Gastrocnemius medialis (tissue), 4 donors: ENCODE measurements at regions of chr5 and their contacts with region 1.

Region 1: DNA sequence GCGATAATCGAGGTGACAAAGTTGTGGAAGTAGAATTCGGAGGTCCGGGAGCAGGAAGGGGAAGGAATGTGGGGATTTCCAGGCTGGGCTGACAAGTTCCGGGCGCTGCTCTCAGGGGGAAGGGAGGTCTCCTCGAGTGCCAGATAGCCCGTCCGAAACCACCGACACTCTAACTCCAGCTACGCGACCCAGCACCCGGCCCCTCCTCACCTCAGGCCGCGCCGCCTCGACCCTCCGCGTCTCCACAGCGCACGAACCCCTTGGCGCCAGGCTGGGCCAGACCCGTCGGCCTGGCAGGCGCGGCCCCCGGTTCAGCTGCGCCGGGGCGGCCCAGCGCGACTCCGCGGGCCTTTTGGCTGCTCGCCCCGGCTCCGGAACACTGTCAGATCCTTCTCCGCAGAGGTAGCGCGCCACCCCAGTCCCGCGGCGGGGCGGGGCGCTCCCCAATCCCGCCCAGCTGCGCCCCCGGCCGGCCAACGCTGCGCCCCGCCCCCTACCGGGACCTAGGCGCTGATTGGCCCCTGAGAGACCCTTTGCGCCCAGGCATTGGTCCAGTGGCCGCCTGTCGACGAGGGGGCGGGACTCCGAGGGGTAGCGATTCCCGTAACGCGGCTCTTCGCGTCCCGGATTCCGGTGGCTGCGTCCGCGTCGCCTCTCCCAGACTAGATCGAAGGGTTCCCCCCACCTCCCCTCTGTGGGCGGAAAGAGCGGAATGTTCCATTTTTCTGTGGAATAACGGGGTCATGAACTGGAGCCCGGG is at the start of gene IL6ST:
- DNase-seq: peak; percentile 96 to 97
- ATAC-seq: peak; percentile 84 to 87
- H3K4me3 ChIP-seq: peak within 1 kb of the TSS; percentile 82 to 95 (median 84)
- H3K27ac ChIP-seq: peak within 1 kb of the TSS; percentile 95 to 99 (median 98)
- H3K4me1 ChIP-seq: peaks cover 35 to 36% of the 10 kb centered on the region in 2 donors
- H3K27me3 ChIP-seq: no peaks in the 10 kb centered on the region
- CTCF ChIP-seq: peak in 1 of 5 experiments; percentile 17
- POLR2A ChIP-seq: peak; percentile 96 to 98
- total RNA-seq, gene IL6ST: 128 to 228 (median 167) TPM

Region 2: DNA sequence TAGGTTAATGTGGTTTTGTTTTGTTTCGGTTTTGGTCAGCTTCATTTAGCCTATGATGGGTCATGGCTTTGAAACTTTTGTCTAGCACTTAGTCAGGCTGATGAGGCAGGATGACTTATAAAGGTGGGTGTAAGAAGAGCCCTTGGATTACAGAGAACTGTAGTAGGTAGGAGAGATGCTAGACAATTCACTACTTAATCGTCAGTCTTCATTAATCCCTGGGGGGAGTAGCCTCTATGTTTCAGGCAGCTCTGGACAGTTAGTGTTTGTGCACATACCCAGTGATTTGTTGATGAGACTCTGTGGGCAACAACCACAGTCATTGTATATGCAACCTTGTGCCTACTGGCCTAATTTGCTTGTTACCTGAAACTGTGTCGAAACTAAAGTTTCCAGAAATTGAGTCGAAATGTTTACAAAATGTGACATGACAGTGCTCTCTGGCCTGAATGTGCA is 573.7 kb before region 1 on chr5:
- in situ Hi-C with region 1: no loop called
- intact Hi-C with region 1: loop called (anchors 10 kb)
- DNase-seq: no peak
- ATAC-seq: no peak
- H3K4me3 ChIP-seq: no peak overlapping the region
- H3K27ac ChIP-seq: peak overlapping the region; percentile 1 to 53 (median 30)
- H3K4me1 ChIP-seq: peaks cover 33 to 54% of the 10 kb centered on the region in 2 donors
- H3K27me3 ChIP-seq: no peaks in the 10 kb centered on the region
- CTCF ChIP-seq: no peak
- POLR2A ChIP-seq: no peak

Region 3: DNA sequence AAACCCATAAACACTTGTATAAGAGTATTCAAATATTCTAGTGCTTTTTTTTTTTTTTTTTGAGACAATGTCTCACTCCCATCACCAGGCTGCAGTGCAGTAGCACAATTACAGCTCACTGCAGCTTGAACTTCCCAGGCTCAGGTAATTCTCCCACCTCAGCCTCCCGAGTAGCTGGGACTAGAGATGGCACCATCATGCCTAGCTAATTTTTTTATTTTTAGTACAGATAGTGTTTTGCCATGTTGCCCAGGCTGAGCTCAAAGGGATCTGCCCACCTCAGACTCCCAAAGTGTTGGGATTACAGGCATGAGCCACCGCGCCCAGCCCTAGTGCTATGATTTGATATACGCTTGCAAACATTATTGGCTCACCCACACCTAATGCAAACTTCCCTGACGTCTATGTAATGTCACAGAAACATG is 11.8 kb before region 1 on chr5:
- in situ Hi-C with region 1: no loop called
- intact Hi-C with region 1: loop called (anchors 2 kb)
- DNase-seq: no peak
- ATAC-seq: no peak
- H3K4me3 ChIP-seq: no peak overlapping the region
- H3K27ac ChIP-seq: peak overlapping the region; percentile 2 to 52 (median 46)
- H3K4me1 ChIP-seq: peaks cover 37 to 38% of the 10 kb centered on the region in 2 donors
- H3K27me3 ChIP-seq: no peaks in the 10 kb centered on the region
- CTCF ChIP-seq: peak in 1 of 5 experiments; percentile 28
- POLR2A ChIP-seq: no peak

Region 4: DNA sequence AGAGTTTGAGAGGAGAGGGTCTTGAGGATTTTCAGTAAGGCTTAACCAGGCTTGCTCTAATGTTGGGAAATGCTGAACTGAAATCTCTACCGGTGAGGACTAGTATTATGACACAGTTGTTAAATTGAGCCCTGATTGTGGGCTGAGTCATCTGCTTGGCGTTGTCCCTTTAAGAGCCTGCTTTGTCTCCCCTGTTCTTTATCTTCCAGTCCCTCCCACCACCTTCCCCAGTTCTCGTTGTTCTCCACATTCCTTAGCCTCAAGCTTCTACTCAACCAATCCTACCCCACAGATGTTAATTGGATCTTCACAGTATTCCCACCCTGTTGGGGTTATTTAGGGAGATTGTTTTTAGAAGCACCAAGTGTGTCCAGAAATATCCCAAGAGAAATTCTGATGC is 180.7 kb after region 1 on chr5:
- in situ Hi-C with region 1: loop called in 1 of 4 experiments (anchors 25 kb)
- intact Hi-C with region 1: no loop called
- DNase-seq: peak in 1 of 2 donors; percentile 41
- ATAC-seq: peak; percentile 61 to 85
- H3K4me3 ChIP-seq: no peak overlapping the region
- H3K27ac ChIP-seq: peak overlapping the region; percentile 26 to 56 (median 35)
- H3K4me1 ChIP-seq: peaks cover 0 to 14% of the 10 kb centered on the region in 2 donors
- H3K27me3 ChIP-seq: no peaks in the 10 kb centered on the region
- CTCF ChIP-seq: no peak
- POLR2A ChIP-seq: no peak

Region 5: DNA sequence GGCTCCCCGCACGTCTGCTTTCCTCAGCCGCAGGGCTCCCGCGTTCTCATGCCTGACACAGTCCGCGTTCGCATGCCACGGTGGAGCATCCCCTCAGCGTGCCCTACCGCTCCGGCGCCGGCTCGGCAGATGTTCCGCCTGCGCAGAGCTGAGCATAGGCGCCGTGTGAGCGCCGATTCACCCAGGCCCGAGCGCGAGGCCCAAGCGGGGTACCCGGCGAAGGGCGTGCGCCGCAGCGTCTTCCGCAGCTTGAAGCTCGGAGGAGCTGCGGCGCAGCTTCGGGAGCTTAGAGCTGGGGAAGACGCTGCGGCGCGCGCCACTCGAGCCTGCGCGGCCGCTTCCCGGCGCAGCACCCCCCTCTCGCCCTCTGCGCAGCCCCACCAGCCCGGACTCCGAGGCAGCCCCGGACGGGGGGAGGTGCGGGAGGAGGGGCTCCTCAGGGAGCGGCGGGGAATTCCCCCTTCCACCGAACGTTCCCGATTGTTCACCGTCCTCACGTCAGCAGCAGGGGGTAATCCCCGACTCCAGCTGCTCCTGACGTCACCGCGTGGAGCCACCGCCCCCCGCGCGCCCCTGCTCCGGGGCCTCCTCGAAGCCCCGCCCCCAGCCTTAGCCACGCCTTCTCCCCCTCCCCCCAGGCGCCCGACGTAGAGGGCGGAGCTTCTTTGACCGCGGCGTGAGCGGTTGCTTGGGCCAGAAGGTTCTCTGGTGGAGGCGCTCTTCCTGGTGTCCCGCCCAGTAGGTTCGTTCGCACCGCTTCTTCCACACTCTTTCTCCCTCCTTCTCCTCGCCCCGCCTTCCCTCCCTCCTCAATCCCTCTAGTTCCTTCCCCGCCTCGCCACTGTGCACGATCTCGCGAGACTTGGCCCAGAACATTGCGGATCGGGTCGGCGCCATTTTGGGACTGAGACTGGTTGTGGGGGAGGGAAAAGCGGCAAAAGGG is 1178.7 kb after region 1 on chr5 and contains the start of gene GPBP1:
- in situ Hi-C with region 1: loop called in 2 of 4 experiments (anchors 25 kb)
- intact Hi-C with region 1: loop called (anchors 2 kb)
- DNase-seq: peak; percentile 96 to 98
- ATAC-seq: peak; percentile 83 to 84
- H3K4me3 ChIP-seq: peak within 1 kb of the TSS; percentile 84 to 99 (median 92)
- H3K27ac ChIP-seq: peak within 1 kb of the TSS; percentile 98 to 100 (median 100)
- H3K4me1 ChIP-seq: peaks cover 25 to 35% of the 10 kb centered on the region in 2 donors
- H3K27me3 ChIP-seq: no peaks in the 10 kb centered on the region
- CTCF ChIP-seq: peak in 1 of 5 experiments; percentile 9
- POLR2A ChIP-seq: peak; percentile 79 to 85
- total RNA-seq, gene GPBP1: 40.4 to 58.0 (median 50.5) TPM